Astrocyte of the cerebellum (primary cell): ENCODE measurements at regions of chr7 and their contacts with region 1.

Region 1: DNA sequence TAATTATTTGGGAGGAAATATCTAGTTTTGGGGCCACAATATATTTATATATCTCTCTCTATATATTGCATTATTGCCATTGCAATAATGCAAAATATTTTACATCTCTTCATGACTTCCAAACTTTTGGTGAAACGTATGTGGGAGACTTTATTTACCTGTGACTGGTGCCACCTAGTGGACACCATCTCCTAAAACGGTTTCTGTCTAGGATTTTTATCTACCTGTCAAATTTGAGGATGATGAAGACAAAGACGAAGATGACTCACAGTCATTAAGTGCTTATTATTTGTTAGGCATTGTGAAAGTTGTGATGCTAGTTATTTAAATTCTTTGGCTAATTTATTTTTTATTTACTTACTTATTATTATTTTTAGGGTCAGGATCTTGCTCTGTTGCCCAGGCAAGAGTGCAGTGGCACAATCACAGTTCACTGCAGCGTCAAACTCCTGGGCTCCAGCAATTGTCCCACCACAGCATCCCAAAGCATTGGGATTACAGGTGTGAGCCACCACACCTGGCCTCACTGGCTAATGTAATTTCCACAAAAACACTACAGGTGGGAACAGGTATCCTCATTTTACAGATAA is 18.7 kb upstream of the CBLL1 start:
- DNase-seq: peak; percentile 58
- H3K4me3 ChIP-seq: no peak overlapping the region
- CTCF ChIP-seq: peak; percentile 56

Region 2: GRCh38 chr7:107462740-107463444 is 262.4 kb before region 1 on chr7:
- in situ Hi-C with region 1: loop called (anchors 5 kb)
- DNase-seq: peak; percentile 63
- H3K4me3 ChIP-seq: no peak overlapping the region
- CTCF ChIP-seq: peak; percentile 84